ENCODE measurements at regions of chr3 and their contacts with region 1.

Region 1: GRCh38 chr3:123687286-123687685 is 102.4 kb upstream of the HACD2 start:
- DNase-seq: no peak
- ATAC-seq: no peak
- H3K4me3 ChIP-seq: no peak overlapping the region
- H3K27ac ChIP-seq: peak overlapping the region; percentile 52 to 75
- H3K4me1 ChIP-seq: peaks cover 0 to 6% of the 10 kb centered on the region in 2 donors
- H3K27me3 ChIP-seq: no peaks in the 10 kb centered on the region

Region 2: DNA sequence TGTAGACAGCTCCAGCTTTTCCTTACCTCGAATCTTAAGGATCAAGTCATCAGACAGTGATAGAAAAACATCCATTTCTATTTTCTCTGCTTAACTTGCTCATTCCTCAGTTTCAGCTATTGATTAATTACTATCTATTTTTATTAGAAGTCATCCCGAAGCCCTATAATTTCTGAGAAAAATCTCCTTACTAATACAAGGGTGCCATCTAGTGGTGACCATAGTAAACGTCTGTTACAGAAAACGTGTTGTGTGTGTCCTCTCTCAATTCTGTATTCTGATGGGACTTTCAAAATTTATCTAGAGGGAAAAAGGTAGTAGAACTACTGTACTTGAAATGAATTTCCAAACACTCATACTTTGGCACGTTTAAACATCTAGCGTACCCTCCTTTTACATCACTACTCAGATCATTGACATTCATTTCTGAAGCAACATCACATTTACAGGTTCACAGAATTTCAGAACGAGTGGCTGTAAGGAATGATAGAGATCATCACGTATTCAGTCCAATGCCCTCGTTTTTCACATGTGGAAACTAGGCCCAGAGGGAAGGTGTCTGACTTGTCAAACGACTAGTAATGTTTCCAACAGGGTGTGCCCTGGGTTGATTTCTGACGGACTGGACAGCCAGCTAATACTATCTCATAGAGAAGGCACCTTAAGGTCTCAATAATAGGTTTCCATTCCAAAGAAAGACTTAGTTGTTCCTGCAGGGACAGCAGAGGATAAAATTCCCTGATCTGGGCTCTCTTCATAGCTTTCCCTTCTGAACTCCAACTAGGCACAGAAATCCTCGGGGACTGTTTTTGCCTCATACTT is 128.0 kb before region 1 on chr3:
- intact Hi-C with region 1: no loop called
- DNase-seq: no peak
- ATAC-seq: peak; percentile 68
- H3K4me3 ChIP-seq: no peak overlapping the region
- H3K27ac ChIP-seq: no peak overlapping the region
- H3K4me1 ChIP-seq: no peaks in the 10 kb centered on the region
- H3K27me3 ChIP-seq: no peaks in the 10 kb centered on the region

Region 3: GRCh38 chr3:123716411-123716810 is 29.1 kb after region 1 on chr3:
- intact Hi-C with region 1: loop called in 1 of 2 experiments (anchors 2 kb)
- DNase-seq: no peak
- ATAC-seq: no peak
- H3K4me3 ChIP-seq: no peak overlapping the region
- H3K27ac ChIP-seq: peak overlapping the region; percentile 30 to 50
- H3K4me1 ChIP-seq: peaks cover 3 to 8% of the 10 kb centered on the region in 2 donors
- H3K27me3 ChIP-seq: no peaks in the 10 kb centered on the region